ENCODE measurements at regions of chr13 and their contacts with region 1.

Region 1: DNA sequence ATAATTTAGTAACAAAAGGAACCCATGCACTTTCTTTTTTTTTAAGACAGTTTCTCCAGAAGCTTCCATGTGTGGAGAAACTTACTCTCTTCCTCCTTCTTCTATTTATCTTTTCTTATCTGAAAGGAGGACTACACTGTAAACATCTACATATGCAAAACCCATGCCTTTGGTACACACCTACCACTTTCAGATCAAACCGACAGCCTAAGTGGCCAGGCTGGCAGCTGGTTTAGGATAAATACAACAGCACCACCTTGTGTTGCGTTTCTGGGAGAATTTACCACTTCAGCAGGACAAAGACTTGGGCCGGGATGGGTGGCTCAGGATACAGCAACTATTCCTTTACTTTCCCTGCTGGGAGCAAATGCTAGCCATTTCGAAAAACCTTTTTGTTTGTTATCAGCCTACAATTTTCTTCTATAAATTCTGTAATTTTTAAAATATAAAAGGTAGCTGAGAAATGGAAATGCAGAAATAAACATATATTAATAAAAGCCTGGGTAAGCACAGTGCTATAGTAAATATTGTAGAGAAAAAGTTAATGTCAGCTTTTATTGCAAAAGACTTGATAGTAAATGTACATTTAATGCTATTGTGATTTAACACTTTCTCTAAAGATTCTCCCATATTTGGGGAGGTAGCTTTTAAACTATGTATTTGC is 94.0 kb upstream of the RFC3 start:
- DNase-seq: peak; percentile 64
- H3K4me3 ChIP-seq: no peak overlapping the region
- H3K27ac ChIP-seq: no peak overlapping the region
- H3K4me1 ChIP-seq: peaks cover 11% of the 10 kb centered on the region
- H3K27me3 ChIP-seq: no peaks in the 10 kb centered on the region
- CTCF ChIP-seq: peak; percentile 67 to 84

Region 2: DNA sequence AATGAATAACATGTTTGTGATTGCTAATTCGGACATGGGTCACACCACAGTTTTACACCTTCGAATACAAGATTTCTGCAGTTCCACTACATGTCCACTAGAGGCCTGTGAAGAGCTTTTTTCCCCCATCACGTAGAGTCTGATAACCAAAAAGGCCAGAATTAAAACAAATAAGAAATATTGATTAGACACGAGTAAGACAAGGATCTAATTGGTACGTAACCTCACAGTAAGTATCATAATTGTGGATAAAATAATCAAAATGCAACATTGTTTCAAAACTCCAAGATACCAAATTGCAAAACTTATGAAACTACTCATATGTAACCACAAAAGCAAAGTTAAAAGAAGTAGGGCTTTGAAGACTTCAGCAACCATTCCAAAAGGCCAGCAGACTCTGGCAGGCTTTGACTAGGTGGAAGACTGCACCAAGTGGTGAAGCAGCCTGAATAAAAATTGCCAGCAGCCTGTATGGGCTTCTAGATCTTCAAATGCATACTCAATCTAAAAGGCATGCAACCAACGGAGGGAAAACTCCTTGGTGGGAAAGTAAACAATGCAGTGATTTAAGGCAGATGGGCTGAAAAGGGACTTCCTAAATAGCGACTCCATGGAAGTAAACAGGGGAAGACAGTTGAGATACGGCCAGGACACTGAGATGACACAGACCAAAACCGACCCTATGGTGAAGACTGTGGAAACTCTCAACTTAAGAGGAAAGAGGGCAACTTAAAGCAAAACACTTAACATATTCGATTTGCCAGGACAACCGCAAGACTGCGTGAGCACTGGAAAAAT is 495.1 kb before region 1 on chr13:
- CTCF ChIA-PET with region 1: no interaction called
- dilution Hi-C with region 1: no loop called
- in situ Hi-C with region 1: loop called in 1 of 2 experiments (anchors 25 kb)
- intact Hi-C with region 1: loop called (anchors 2 kb)
- DNase-seq: no peak
- H3K4me3 ChIP-seq: no peak overlapping the region
- H3K27ac ChIP-seq: peak overlapping the region; percentile 3
- H3K4me1 ChIP-seq: peaks cover 47% of the 10 kb centered on the region
- H3K27me3 ChIP-seq: no peaks in the 10 kb centered on the region
- CTCF ChIP-seq: peak; percentile 98

Region 3: DNA sequence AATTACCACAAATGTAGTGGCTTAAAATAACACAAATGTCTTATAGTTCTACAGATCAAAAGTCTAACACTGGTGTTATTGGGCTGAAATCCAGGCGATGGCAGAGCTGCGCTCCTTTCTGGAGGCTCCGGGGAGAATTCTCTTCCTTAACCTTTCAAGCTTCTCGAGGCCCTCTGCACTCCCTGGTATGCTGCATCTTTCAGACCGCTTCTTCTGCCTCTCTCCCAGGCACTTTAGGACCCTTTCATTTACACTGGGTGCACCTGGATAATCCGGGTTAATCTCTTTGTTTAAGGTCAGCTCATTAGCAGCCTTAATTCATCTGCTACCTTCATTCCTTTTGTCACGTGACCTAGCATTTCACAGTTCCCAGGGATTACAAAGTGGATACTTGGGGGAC is 117.2 kb before region 1 on chr13:
- CTCF ChIA-PET with region 1: no interaction called
- dilution Hi-C with region 1: no loop called
- in situ Hi-C with region 1: no loop called
- intact Hi-C with region 1: loop called (anchors 1 kb)
- DNase-seq: no peak
- H3K4me3 ChIP-seq: no peak overlapping the region
- H3K27ac ChIP-seq: no peak overlapping the region
- H3K4me1 ChIP-seq: no peaks in the 10 kb centered on the region
- H3K27me3 ChIP-seq: no peaks in the 10 kb centered on the region
- CTCF ChIP-seq: no peak

Region 4: DNA sequence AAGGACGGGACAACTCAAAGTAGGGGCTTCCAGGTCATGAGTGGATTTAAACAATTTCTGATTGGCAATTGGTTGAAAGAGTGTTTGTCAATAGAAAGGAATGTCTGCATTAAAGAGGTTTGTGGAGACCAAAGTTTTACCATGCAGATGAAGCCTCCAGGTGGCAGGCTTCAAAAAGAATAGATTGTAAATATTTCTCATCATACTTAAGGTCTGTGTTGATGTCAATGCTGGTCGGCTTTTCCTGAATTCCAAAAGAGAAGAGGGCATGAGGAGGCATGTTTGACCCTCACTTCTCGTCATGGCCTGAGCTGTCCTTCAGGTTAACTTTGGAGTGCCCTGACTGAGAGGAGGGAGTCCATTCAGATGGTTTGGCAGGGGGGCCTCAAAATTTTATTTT is 31.4 kb before region 1 on chr13:
- CTCF ChIA-PET with region 1: no interaction called
- dilution Hi-C with region 1: no loop called
- in situ Hi-C with region 1: no loop called
- intact Hi-C with region 1: loop called (anchors 1 kb)
- DNase-seq: peak; percentile 29
- H3K4me3 ChIP-seq: no peak overlapping the region
- H3K27ac ChIP-seq: no peak overlapping the region
- H3K4me1 ChIP-seq: peaks cover 2% of the 10 kb centered on the region
- H3K27me3 ChIP-seq: no peaks in the 10 kb centered on the region
- CTCF ChIP-seq: peak in 1 of 2 donors; percentile 7

Region 5: GRCh38 chr13:35157143-35157755 is 1433.3 kb after region 1 on chr13:
- CTCF ChIA-PET with region 1: no interaction called
- dilution Hi-C with region 1: no loop called
- in situ Hi-C with region 1: no loop called
- intact Hi-C with region 1: loop called (anchors 10 kb)
- DNase-seq: peak; percentile 29
- H3K4me3 ChIP-seq: no peak overlapping the region
- H3K27ac ChIP-seq: no peak overlapping the region
- H3K4me1 ChIP-seq: no peaks in the 10 kb centered on the region
- H3K27me3 ChIP-seq: no peaks in the 10 kb centered on the region
- CTCF ChIP-seq: peak; percentile 68 to 72